ENCODE measurements at regions of chr16 and their contacts with region 1.

Region 1: GRCh38 chr16:74862741-74863244 is 88.2 kb upstream of the FA2H start:
- DNase-seq: no peak
- ATAC-seq: no peak
- H3K4me3 Mint-ChIP-seq: no peak overlapping the region
- H3K27ac Mint-ChIP-seq: no peak overlapping the region
- H3K4me1 Mint-ChIP-seq: peaks cover 7% of the 10 kb centered on the region
- H3K27me3 Mint-ChIP-seq: no peaks in the 10 kb centered on the region

Region 2: DNA sequence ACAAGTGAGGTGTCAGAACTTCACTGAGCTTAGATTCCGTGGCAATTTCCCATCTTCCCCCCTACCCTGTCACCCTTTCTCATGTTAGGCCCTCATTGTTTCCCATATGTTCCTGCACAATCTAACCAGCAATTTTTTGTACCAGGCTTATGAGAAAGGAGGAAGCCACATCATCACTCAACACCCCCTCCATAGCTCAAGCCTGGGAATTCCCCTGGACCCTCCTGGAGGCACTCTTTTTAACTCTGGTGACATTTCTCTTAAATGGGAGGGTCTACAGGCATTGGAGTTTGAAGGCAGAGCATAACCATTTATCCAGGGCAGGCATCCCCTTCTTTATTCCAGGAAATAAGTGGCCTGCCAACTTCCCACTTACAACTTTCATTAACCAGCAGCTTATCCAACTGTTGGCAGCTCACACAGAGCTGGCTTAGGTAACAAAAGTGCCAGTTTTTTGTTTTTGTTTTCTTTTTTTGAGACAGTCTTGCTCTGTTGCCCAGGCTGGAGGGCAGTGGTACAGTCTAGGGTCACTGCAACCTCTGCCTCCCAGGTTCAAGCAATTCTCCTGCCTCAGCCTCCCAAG is 245.5 kb before region 1 on chr16:
- CTCF ChIA-PET with region 1: no interaction called
- POLR2A ChIA-PET with region 1: no interaction called
- DNase-seq: no peak
- ATAC-seq: no peak
- H3K4me3 Mint-ChIP-seq: no peak overlapping the region
- H3K27ac Mint-ChIP-seq: peak overlapping the region; percentile 33
- H3K4me1 Mint-ChIP-seq: peaks cover 5% of the 10 kb centered on the region
- H3K27me3 Mint-ChIP-seq: no peaks in the 10 kb centered on the region

Region 3: GRCh38 chr16:74695450-74696422 is 167.1 kb before region 1 on chr16:
- CTCF ChIA-PET with region 1: interaction called, 15 read pairs
- POLR2A ChIA-PET with region 1: interaction called, 3 read pairs
- DNase-seq: peak; percentile 79
- ATAC-seq: peak; percentile 74
- H3K4me3 Mint-ChIP-seq: peak overlapping the region; percentile 74
- H3K27ac Mint-ChIP-seq: peak overlapping the region; percentile 60
- H3K4me1 Mint-ChIP-seq: peaks cover 46% of the 10 kb centered on the region
- H3K27me3 Mint-ChIP-seq: no peaks in the 10 kb centered on the region

Region 4: DNA sequence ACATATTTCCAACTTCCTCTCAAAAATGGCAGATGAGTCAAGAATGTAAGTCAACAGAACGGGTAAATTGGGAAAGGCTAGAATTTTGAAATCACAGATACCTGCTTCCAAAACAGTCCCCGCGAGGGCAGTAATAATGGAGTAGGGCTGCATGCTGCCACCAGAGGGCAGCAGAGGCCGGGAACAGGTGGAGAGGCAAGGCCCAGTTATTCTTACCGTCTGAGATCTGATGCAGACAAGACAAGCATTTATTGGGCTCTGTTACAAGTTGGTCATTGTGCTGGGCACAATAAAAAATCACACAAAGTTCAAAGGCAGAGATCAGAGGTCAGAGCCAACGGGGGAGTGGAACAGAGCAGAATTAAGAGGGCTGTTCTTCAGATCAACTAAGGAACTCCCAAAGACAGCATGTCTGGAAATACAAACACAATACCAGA is 153.3 kb before region 1 on chr16:
- CTCF ChIA-PET with region 1: interaction called, 41 read pairs
- POLR2A ChIA-PET with region 1: no interaction called
- DNase-seq: peak; percentile 87
- ATAC-seq: peak; percentile 96
- H3K4me3 Mint-ChIP-seq: no peak overlapping the region
- H3K27ac Mint-ChIP-seq: no peak overlapping the region
- H3K4me1 Mint-ChIP-seq: peaks cover 7% of the 10 kb centered on the region
- H3K27me3 Mint-ChIP-seq: peaks cover 6% of the 10 kb centered on the region

Region 5: DNA sequence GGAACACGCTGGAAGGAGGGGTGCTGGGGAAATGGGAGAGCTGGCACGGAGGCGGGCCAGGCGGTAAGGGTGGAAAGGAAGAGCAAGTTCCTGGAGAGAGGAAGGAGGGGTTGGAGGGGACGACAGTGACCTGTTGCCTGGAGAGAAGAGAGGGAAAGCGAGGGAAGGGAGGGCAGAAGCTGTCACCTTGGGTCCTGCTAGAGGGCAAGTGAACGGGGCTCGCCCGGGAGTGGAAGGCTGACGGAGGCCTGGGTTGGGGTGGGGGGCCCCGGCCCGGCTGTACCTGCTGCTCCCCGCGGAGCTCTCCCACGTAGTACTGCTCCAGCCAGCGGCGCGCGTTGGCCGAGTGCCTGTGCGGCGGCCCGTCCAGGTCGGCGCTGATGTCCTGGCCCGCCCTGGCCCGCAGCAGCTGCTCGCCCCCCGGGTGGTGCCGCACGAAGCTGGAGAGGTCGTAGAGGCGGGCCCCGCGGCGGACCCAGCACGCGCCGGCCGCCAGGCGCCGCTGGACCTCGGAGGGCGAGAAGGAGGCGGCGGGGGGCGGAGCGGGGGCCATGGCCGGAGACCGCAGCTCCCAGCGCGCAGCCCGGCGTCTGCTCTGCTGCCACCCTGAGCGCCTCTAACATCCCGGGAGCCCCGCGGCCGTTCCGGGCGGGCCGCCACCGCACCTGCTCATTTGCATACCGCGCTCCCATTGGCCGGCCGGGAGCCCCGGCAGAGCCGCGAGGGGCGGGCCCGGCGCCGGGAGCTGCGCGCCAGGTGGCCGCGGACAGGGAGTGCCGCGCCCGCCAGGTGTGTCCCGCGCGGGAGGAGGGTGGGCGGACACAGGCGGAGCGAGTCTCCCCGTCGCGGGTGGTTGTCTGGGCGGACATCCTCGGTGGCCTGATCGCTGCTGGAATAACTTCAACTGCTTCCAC is 88.3 kb before region 1 on chr16 and contains the start of gene FA2H:
- CTCF ChIA-PET with region 1: interaction called, 10 read pairs
- POLR2A ChIA-PET with region 1: no interaction called
- DNase-seq: peak; percentile 81
- ATAC-seq: peak; percentile 99
- H3K4me3 Mint-ChIP-seq: peak within 1 kb of the TSS; percentile 49
- H3K27ac Mint-ChIP-seq: no peak within 1 kb of the TSS
- H3K4me1 Mint-ChIP-seq: peaks cover 13% of the 10 kb centered on the region
- H3K27me3 Mint-ChIP-seq: peaks cover 33% of the 10 kb centered on the region
- total RNA-seq, gene FA2H: not detected

Region 6: DNA sequence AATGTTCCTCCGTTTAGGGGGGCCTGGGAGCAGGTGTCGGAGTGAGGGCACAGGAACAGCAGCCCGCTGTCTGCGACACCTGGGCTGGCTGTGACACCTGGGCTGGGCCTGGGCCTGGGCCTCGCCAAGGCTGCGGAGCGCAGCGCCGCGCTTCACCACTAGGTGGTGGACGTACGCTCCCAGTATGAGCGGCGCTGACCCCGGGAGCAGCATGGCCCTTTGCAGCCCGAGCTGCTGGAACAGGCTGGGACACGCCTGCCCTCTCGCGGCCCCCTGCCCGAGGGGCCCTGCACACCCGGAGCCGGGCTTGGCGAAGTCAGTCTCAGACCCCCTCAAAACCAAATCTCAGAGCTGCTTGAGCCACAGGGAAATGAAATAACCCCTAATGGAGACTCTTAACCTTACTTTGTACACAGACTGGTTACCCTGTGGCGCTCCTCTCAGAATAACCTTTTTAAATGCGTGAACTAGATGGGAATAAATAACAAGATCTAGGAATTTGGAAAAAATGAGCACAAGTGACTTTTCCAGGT is 49.6 kb before region 1 on chr16:
- CTCF ChIA-PET with region 1: interaction called, 43 read pairs
- POLR2A ChIA-PET with region 1: no interaction called
- DNase-seq: peak; percentile 75
- ATAC-seq: peak; percentile 100
- H3K4me3 Mint-ChIP-seq: no peak overlapping the region
- H3K27ac Mint-ChIP-seq: no peak overlapping the region
- H3K4me1 Mint-ChIP-seq: no peaks in the 10 kb centered on the region
- H3K27me3 Mint-ChIP-seq: peaks cover 7% of the 10 kb centered on the region

Region 7: GRCh38 chr16:74852500-74852875 is 10.3 kb before region 1 on chr16:
- CTCF ChIA-PET with region 1: interaction called, 13 read pairs
- POLR2A ChIA-PET with region 1: no interaction called
- DNase-seq: no peak
- ATAC-seq: no peak
- H3K4me3 Mint-ChIP-seq: no peak overlapping the region
- H3K27ac Mint-ChIP-seq: no peak overlapping the region
- H3K4me1 Mint-ChIP-seq: no peaks in the 10 kb centered on the region
- H3K27me3 Mint-ChIP-seq: no peaks in the 10 kb centered on the region

Region 8: DNA sequence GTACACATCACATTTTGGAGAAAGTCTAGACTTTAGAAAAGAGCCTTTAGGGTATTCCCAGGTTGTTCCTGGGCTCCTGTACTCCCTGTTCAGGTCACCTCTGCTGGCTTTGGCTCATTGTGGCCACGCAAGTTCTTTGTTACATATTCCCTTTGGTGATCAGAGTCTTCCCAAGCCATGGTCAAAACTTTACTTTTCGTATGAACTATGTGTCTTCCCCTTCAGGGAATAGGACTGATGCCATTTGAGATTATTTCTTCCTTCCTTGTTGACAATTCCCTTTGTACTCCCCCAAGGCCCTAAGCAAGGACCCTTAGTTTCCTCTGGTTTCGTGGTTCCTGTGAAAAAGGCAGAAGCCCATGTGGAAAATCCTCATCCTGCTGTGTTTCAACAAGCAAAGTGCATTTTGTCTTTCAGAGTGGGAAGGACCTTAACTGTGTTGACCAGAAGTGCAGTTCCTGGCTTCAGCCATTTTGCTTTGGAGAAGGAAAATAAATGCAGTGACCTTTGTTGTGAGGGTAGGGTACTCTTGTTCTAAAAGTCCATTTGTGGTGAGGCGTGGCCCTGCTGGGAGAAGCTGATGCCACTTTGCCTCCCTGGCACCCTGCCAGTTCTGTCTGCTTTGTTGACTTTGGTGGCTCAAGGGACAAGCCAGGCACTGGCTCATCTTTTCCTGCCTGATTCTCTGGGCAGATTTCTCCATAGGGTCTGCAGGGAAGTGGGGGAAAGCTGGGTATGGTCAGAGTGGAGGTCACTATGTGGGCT is 191.2 kb after region 1 on chr16:
- CTCF ChIA-PET with region 1: no interaction called
- POLR2A ChIA-PET with region 1: no interaction called
- DNase-seq: no peak
- ATAC-seq: no peak
- H3K4me3 Mint-ChIP-seq: no peak overlapping the region
- H3K27ac Mint-ChIP-seq: no peak overlapping the region
- H3K4me1 Mint-ChIP-seq: no peaks in the 10 kb centered on the region
- H3K27me3 Mint-ChIP-seq: no peaks in the 10 kb centered on the region

Measured in activated CD8-positive, alpha-beta T cell treated with anti-CD3 and anti-CD28 coated beads, Interleukin-2, amount 10 ng/mL, durations not matched to agents 7 days and 5 days (primary cell).